ENCODE measurements at regions of chr12 and their contacts with region 1.

Region 1: GRCh38 chr12:113196996-113197395 is 11.5 kb downstream of the RITA1 start:
- DNase-seq: peak; percentile 75 to 79
- ATAC-seq: peak; percentile 92
- H3K4me3 ChIP-seq: no peak overlapping the region
- H3K27ac ChIP-seq: no peak overlapping the region
- H3K4me1 ChIP-seq: no peaks in the 10 kb centered on the region
- H3K27me3 ChIP-seq: no peaks in the 10 kb centered on the region

Region 2: DNA sequence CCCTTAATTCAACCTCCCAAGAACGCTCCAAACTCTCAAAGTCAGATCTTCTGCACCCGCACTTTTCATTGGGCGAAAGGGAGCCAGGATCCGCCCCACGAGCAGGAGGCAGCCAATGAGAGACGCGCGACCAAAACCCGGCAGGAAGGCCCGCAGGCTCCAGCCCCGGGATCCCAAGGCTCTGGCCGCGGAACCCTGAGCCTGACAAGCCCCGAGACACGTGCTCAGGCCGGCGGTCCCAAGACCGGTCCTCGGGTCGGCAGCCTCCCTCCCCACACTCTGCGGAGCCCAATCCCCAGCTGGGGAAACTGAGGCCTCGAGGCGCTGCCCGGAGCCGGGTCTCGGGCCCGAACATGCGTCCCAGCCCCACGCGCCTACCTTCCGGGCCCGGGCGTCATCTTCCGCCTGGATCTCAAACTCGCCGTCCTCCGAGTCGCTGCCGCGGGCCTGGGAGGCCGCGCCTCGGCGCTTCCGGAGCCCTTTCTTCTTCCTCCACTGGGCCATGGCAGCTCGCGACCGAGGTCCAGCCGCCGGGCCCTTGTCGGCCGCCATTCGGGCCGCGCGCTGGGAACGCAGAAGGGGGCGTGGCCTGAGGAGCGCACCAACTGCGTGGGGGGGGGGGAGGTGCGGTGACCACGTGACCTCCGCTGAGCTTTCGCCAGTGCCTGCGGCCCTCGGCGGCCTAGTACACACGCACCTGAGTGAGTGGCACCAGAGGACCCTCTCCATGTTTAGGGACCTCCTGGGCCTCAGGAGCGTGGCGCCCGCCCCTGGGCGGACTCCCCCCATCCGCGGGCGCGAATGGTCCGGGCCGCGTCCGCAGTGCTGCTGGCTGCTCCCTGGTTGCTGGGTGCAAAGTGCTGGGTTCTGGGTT is 11.9 kb before region 1 on chr12 and contains the starts of genes DDX54 and RITA1:
- intact Hi-C with region 1: no loop called
- DNase-seq: peak; percentile 93 to 95
- ATAC-seq: peak; percentile 95
- H3K4me3 ChIP-seq: peak within 1 kb of the TSS; percentile 63 to 71
- H3K27ac ChIP-seq: peak within 1 kb of the TSS; percentile 47 to 79
- H3K4me1 ChIP-seq: peaks cover 2% of the 10 kb centered on the region in 2 donors
- H3K27me3 ChIP-seq: no peaks in the 10 kb centered on the region
- total RNA-seq, gene DDX54: 47.2 to 48.6 TPM
- total RNA-seq, gene RITA1: 6.1 to 10.0 TPM

Region 3: GRCh38 chr12:113271853-113272561 is 75.0 kb after region 1 on chr12:
- intact Hi-C with region 1: loop called (anchors 1 to 5 kb)
- DNase-seq: peak; percentile 91 to 94
- ATAC-seq: peak; percentile 95
- H3K4me3 ChIP-seq: no peak overlapping the region
- H3K27ac ChIP-seq: peak overlapping the region; percentile 84 to 93
- H3K4me1 ChIP-seq: peaks cover 0 to 2% of the 10 kb centered on the region in 2 donors
- H3K27me3 ChIP-seq: no peaks in the 10 kb centered on the region

Region 4: DNA sequence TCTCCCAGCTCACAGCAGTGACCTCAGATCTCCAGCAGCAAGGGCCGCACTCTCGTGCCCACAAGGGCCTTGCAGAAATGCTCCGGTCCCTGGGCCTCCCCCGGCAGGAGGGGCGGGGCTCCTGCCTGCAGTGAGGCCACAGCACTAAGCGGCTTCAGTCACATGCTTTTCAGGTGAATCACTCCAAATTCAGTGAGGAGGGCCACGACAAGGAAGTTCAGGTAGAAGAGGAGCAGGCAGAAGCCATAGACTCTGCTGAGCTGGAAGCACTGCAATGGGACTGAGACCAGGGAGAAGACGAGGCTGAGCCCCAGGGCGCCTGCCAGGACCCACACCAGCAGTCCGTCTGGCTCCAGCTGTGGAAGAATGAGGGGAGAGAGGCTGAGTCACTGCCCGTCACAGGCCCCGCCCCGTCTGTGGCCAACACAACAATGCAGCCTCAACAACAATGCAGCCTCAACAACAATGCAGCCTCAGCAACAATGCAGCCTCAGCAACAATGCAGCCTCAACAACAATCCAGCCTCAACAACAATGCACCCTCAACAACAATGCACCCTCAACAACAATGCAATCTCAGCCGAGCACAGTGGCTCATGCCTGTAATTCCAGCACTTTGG is 102.7 kb after region 1 on chr12:
- intact Hi-C with region 1: loop called in 1 of 2 experiments (anchors 2 kb)
- DNase-seq: peak; percentile 85 to 88
- ATAC-seq: peak; percentile 72
- H3K4me3 ChIP-seq: no peak overlapping the region
- H3K27ac ChIP-seq: peak overlapping the region; percentile 63 to 65
- H3K4me1 ChIP-seq: peaks cover 0 to 3% of the 10 kb centered on the region in 2 donors
- H3K27me3 ChIP-seq: no peaks in the 10 kb centered on the region

Region 5: GRCh38 chr12:113358381-113359132 is 161.6 kb after region 1 on chr12 and contains the start of gene PLBD2:
- intact Hi-C with region 1: loop called (anchors 5 kb)
- DNase-seq: peak; percentile 97 to 98
- ATAC-seq: peak; percentile 97
- H3K4me3 ChIP-seq: peak within 1 kb of the TSS; percentile 28 to 90
- H3K27ac ChIP-seq: peak within 1 kb of the TSS; percentile 3 to 75
- H3K4me1 ChIP-seq: no peaks in the 10 kb centered on the region
- H3K27me3 ChIP-seq: no peaks in the 10 kb centered on the region
- total RNA-seq, gene PLBD2: 60.6 to 76.1 TPM

Region 6: DNA sequence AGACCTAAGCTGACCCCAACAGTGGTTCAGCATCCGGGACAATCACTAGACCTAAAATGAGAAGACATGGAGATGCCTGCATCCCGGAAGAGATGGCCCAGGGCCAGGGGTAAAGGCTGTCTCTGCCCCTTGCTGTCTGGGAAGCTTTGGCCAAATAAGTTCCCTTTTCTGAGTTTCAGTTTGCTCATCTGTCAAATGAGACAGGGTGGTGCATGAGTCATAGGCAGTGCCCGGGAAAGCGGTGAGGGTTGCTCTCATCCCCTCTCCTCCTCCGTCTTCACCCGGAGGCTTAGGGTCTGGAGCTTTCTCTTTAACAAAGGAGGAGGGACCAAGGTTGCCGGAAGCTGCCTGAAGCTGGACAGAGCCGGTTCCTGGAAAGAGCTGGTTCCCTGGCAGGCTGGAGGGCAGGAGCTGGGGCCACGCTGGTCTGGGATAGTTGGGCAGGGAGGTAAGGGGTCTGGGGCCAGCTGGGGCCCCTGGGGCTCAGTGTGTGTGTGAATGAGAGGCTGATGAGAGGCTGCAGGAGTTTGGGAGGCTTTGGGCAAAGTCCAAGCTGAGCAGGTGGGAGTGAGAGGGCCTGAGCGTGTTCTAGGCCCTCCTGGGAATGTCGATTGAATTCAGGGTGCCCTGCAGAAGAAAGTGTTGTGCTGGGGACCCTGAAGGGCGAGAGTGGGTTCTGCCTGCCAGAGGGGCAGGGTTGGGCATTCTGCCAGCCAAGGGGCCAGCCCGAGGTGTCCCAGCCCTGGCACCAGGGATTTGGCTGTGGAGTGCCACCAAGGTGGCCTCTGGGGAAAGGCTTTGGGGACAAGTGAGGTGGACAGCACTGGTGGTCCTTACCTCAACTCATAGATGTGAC is 225.3 kb after region 1 on chr12 and contains the start of gene SDSL:
- intact Hi-C with region 1: loop called in 1 of 2 experiments (anchors 5 kb)
- DNase-seq: peak; percentile 82 to 90
- ATAC-seq: peak; percentile 75
- H3K4me3 ChIP-seq: peak within 1 kb of the TSS; percentile 50 to 52
- H3K27ac ChIP-seq: no peak within 1 kb of the TSS
- H3K4me1 ChIP-seq: no peaks in the 10 kb centered on the region
- H3K27me3 ChIP-seq: no peaks in the 10 kb centered on the region
- total RNA-seq, gene SDSL: 3.8 to 4.5 TPM

Measured in aorta (tissue), 5 donors.